MCF 10A (cell line): ENCODE measurements at regions of chr3 and their contacts with region 1.

Region 1: DNA sequence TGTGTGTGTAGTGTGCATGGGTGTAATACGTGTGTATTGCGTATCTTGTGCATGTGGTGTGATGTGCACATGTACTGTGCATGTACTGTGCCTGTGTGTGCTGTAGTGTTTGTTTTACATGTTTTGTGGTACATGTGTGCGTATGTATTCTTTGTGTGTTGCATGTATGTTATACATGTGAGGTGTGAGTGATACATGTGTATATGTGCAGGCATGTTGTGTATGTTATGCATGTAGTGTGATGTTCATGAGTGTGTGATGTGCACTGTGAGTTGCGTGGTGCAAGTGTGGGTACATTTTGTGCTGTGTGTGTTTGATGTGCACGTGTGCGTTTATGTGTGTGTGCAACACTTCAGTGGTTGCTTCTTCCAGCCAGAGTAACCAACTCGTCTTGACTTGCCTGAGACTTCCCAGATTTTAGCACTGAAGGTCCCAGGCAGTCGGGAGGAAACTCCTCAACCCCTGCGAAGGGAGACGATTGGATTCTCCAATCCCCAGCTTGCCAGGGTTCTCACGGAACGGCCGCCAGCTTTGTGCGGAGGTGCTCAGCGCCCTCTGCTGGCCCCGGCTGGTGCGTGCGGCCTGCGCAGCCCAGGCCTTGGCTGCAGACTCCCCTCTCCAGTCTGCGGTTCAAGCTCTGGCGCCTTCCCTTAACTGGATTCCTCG is 3.6 kb downstream of the GALNT15 start:
- DNase-seq: peak; percentile 83
- H3K4me3 Mint-ChIP-seq: peak overlapping the region; percentile 73
- H3K27ac Mint-ChIP-seq: no peak overlapping the region
- H3K4me1 Mint-ChIP-seq: peaks cover 62% of the 10 kb centered on the region
- H3K27me3 Mint-ChIP-seq: no peaks in the 10 kb centered on the region
- CTCF ChIP-seq: peak; percentile 95

Region 2: GRCh38 chr3:16069149-16069922 is 108.8 kb before region 1 on chr3:
- CTCF ChIA-PET with region 1: interaction called, 4 read pairs
- POLR2A ChIA-PET with region 1: interaction called, 16 read pairs
- intact Hi-C with region 1: no loop called
- DNase-seq: peak; percentile 74
- H3K4me3 Mint-ChIP-seq: peak overlapping the region; percentile 10
- H3K27ac Mint-ChIP-seq: peak overlapping the region; percentile 85
- H3K4me1 Mint-ChIP-seq: peaks cover 62% of the 10 kb centered on the region
- H3K27me3 Mint-ChIP-seq: no peaks in the 10 kb centered on the region
- CTCF ChIP-seq: no peak

Region 3: DNA sequence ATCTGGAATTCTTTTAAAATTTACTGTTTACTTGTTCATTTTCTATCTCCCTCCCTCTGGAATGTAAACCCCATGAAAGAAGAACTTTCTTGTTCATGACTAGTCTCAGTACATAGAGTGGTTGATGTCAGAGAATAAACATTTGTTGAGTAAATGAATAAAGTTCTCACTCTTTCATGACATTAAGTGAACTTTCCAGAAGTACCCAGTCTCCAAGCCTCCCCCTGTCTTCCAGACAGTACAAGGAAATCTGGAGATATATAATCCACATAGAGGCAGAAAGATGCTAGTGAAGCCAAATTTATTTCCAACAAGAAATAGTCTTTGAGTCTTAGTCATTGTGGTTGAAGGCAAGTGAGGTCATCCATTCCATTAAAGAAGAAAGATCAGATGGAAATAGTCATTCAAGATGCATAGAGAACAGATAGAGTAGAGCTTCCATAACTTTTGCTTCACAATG is 75.2 kb before region 1 on chr3:
- CTCF ChIA-PET with region 1: no interaction called
- POLR2A ChIA-PET with region 1: no interaction called
- intact Hi-C with region 1: loop called (anchors 5 kb)
- DNase-seq: no peak
- H3K4me3 Mint-ChIP-seq: no peak overlapping the region
- H3K27ac Mint-ChIP-seq: peak overlapping the region; percentile 82
- H3K4me1 Mint-ChIP-seq: peaks cover 22% of the 10 kb centered on the region
- H3K27me3 Mint-ChIP-seq: no peaks in the 10 kb centered on the region
- CTCF ChIP-seq: no peak

Region 4: GRCh38 chr3:16240283-16241023 is 62.4 kb after region 1 on chr3:
- CTCF ChIA-PET with region 1: interaction called, 16 read pairs
- POLR2A ChIA-PET with region 1: interaction called, 4 read pairs
- intact Hi-C with region 1: no loop called
- DNase-seq: peak; percentile 82
- H3K4me3 Mint-ChIP-seq: no peak overlapping the region
- H3K27ac Mint-ChIP-seq: peak overlapping the region; percentile 79
- H3K4me1 Mint-ChIP-seq: peaks cover 33% of the 10 kb centered on the region
- H3K27me3 Mint-ChIP-seq: no peaks in the 10 kb centered on the region
- CTCF ChIP-seq: no peak

Region 5: GRCh38 chr3:16247276-16248061 is 69.4 kb after region 1 on chr3:
- CTCF ChIA-PET with region 1: interaction called, 16 read pairs
- POLR2A ChIA-PET with region 1: interaction called, 3 read pairs
- intact Hi-C with region 1: loop called (anchors 1 kb)
- DNase-seq: peak; percentile 89
- H3K4me3 Mint-ChIP-seq: no peak overlapping the region
- H3K27ac Mint-ChIP-seq: no peak overlapping the region
- H3K4me1 Mint-ChIP-seq: peaks cover 32% of the 10 kb centered on the region
- H3K27me3 Mint-ChIP-seq: no peaks in the 10 kb centered on the region
- CTCF ChIP-seq: peak; percentile 95

Region 6: GRCh38 chr3:16273867-16274266 is 95.8 kb after region 1 on chr3:
- CTCF ChIA-PET with region 1: no interaction called
- POLR2A ChIA-PET with region 1: no interaction called
- intact Hi-C with region 1: no loop called
- DNase-seq: no peak
- H3K4me3 Mint-ChIP-seq: no peak overlapping the region
- H3K27ac Mint-ChIP-seq: no peak overlapping the region
- H3K4me1 Mint-ChIP-seq: no peaks in the 10 kb centered on the region
- H3K27me3 Mint-ChIP-seq: no peaks in the 10 kb centered on the region
- CTCF ChIP-seq: no peak